ENCODE measurements at regions of chr6 and their contacts with region 1.

Region 1: GRCh38 chr6:136289579-136290409 is at the start of gene BCLAF1:
- DNase-seq: peak; percentile 100
- ATAC-seq: peak; percentile 78
- H3K4me3 ChIP-seq: peak within 1 kb of the TSS; percentile 93 to 100 (median 99)
- H3K4me3 Mint-ChIP-seq: peak within 1 kb of the TSS; percentile 98
- H3K27ac ChIP-seq: peak within 1 kb of the TSS; percentile 99 to 100
- H3K27ac Mint-ChIP-seq: peak within 1 kb of the TSS; percentile 100
- H3K4me1 ChIP-seq: peaks cover 38 to 49% of the 10 kb centered on the region in 2 donors
- H3K4me1 Mint-ChIP-seq: peaks cover 44% of the 10 kb centered on the region
- H3K27me3 ChIP-seq: no peaks in the 10 kb centered on the region
- H3K27me3 Mint-ChIP-seq: no peaks in the 10 kb centered on the region
- CTCF ChIP-seq: no peak
- total RNA-seq, gene BCLAF1: 256 and 268 TPM in 2 replicates

Region 2: GRCh38 chr6:135497412-135498269 is 792.2 kb before region 1 on chr6 and contains the start of gene AHI1:
- CTCF ChIA-PET with region 1: interaction called, 6 read pairs
- POLR2A ChIA-PET with region 1: interaction called, 17 read pairs
- intact Hi-C with region 1: loop called (anchors 1 kb)
- DNase-seq: peak; percentile 96
- ATAC-seq: peak; percentile 90
- H3K4me3 ChIP-seq: peak within 1 kb of the TSS; percentile 82 to 97 (median 93)
- H3K4me3 Mint-ChIP-seq: peak within 1 kb of the TSS; percentile 20
- H3K27ac ChIP-seq: peak within 1 kb of the TSS; percentile 93 to 99
- H3K27ac Mint-ChIP-seq: no peak within 1 kb of the TSS
- H3K4me1 ChIP-seq: peaks cover 10 to 12% of the 10 kb centered on the region in 2 donors
- H3K4me1 Mint-ChIP-seq: peaks cover 12% of the 10 kb centered on the region
- H3K27me3 ChIP-seq: no peaks in the 10 kb centered on the region
- H3K27me3 Mint-ChIP-seq: no peaks in the 10 kb centered on the region
- CTCF ChIP-seq: no peak
- total RNA-seq, gene AHI1: 57.9 and 61.7 TPM in 2 replicates

Region 3: DNA sequence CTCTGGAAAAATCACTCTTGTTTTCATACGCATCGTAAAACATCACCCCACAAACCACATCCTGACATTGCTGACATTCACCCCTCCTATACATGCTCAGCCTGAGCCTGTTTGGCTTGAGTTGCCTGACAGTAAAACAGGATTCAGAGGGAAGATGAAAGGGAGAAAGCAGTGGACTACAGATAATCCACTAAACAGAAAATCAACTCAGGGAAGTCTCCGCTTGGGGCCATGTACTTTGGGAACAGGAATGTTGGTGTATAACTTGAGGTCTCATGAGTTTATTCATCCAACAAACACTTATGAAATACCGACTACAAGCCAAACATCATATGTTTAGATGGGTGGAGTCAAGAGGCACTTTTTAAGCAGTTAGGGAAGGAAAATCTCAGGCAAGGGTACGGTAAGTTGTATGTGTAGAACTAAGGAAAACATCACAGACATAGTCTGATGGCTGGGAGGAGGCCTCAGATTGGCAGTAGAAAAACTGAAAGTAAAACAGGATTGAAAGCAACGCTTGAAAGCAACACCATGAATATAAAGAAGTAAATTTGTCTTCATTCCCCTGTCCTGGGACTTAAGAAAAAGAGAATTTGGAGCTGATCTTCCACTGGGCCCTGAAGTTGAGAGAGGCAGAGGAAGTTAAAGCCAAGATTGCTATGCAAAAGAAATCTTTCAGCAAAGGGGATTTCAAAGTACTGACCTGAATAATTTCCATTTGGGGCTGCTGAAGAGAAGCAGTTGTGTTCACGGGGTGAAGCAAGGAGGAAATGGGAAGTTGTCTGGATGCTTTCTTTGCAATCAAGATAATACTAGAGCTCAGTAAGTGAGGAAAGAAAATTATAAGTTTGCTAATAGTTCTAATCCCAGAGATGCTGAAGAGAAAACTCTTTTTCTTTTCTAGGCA is 409.5 kb before region 1 on chr6:
- CTCF ChIA-PET with region 1: no interaction called
- POLR2A ChIA-PET with region 1: no interaction called
- intact Hi-C with region 1: loop called (anchors 1 kb)
- DNase-seq: peak; percentile 75
- ATAC-seq: peak; percentile 90
- H3K4me3 ChIP-seq: peak overlapping the region; percentile 14 to 64 (median 36)
- H3K4me3 Mint-ChIP-seq: peak overlapping the region; percentile 84
- H3K27ac ChIP-seq: peak overlapping the region; percentile 91 to 99
- H3K27ac Mint-ChIP-seq: peak overlapping the region; percentile 98
- H3K4me1 ChIP-seq: peaks cover 35% of the 10 kb centered on the region in 2 donors
- H3K4me1 Mint-ChIP-seq: peaks cover 49% of the 10 kb centered on the region
- H3K27me3 ChIP-seq: no peaks in the 10 kb centered on the region
- H3K27me3 Mint-ChIP-seq: no peaks in the 10 kb centered on the region
- CTCF ChIP-seq: no peak

Region 4: GRCh38 chr6:136317021-136317694 is 27.4 kb after region 1 on chr6:
- CTCF ChIA-PET with region 1: interaction called, 7 read pairs
- POLR2A ChIA-PET with region 1: interaction called, 3 read pairs
- intact Hi-C with region 1: loop called (anchors 2 kb)
- DNase-seq: peak; percentile 72
- ATAC-seq: peak; percentile 62
- H3K4me3 ChIP-seq: no peak overlapping the region
- H3K4me3 Mint-ChIP-seq: no peak overlapping the region
- H3K27ac ChIP-seq: no peak overlapping the region
- H3K27ac Mint-ChIP-seq: no peak overlapping the region
- H3K4me1 ChIP-seq: no peaks in the 10 kb centered on the region
- H3K4me1 Mint-ChIP-seq: no peaks in the 10 kb centered on the region
- H3K27me3 ChIP-seq: no peaks in the 10 kb centered on the region
- H3K27me3 Mint-ChIP-seq: peaks cover 7% of the 10 kb centered on the region
- CTCF ChIP-seq: peak; percentile 86

Region 5: GRCh38 chr6:137102851-137103492 is 813.2 kb after region 1 on chr6:
- CTCF ChIA-PET with region 1: no interaction called
- POLR2A ChIA-PET with region 1: no interaction called
- intact Hi-C with region 1: loop called (anchors 5 kb)
- DNase-seq: peak; percentile 92
- ATAC-seq: peak; percentile 81
- H3K4me3 ChIP-seq: peak overlapping the region in 4 of 5 experiments; percentile 8 to 49 (median 16)
- H3K4me3 Mint-ChIP-seq: peak overlapping the region; percentile 86
- H3K27ac ChIP-seq: peak overlapping the region; percentile 97
- H3K27ac Mint-ChIP-seq: peak overlapping the region; percentile 99
- H3K4me1 ChIP-seq: peaks cover 89 to 91% of the 10 kb centered on the region in 2 donors
- H3K4me1 Mint-ChIP-seq: peaks cover 87% of the 10 kb centered on the region
- H3K27me3 ChIP-seq: no peaks in the 10 kb centered on the region
- H3K27me3 Mint-ChIP-seq: no peaks in the 10 kb centered on the region
- CTCF ChIP-seq: no peak

Measured in B cell (primary cell).